ENCODE measurements at regions of chr5 and their contacts with region 1.

Region 1: GRCh38 chr5:79612667-79613198 is 492 bp downstream of the TENT2 start:
- DNase-seq: no peak
- H3K4me3 ChIP-seq: peak overlapping the region; percentile 83 to 91 (median 85)
- H3K27ac ChIP-seq: peak overlapping the region; percentile 87
- H3K4me1 ChIP-seq: no peaks in the 10 kb centered on the region
- H3K27me3 ChIP-seq: no peaks in the 10 kb centered on the region
- CTCF ChIP-seq: no peak

Region 2: DNA sequence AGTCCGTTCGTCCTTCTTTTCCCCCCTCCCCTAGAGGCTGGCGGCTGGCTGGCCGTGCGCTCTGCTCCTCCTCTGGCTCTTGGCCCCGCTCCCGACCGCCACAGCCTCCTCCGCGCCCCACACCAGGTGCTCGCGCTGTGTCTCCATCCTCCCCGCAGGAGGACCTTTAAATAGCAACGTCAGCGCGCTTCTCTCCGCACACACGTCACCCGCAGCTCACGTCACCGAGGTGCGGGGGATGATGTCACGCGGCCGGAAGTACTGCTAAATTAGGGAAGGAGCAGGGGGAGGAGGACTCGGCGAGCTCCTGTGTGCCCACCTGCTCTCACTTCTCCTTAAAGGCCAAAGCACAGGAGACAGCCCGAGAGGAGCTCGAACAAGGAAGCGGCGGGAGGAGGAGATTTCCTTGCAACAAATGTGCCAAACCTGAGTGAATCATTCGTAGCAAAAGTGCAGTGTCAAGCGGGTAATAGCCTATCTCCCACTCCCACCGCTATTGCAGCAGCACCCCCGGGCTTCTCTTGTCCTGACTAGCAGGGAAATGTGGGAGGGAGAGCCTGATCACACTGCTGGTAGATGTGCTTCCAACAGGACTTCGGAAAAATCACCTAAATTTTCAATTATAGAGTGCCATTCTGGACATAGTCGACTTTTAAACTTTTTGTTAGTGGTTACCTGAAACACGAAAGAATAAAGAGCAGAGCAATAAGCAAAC is 98.2 kb before region 1 on chr5:
- CTCF ChIA-PET with region 1: no interaction called
- dilution Hi-C with region 1: no loop called
- in situ Hi-C with region 1: no loop called
- intact Hi-C with region 1: loop called (anchors 2 kb)
- DNase-seq: peak; percentile 95
- H3K4me3 ChIP-seq: peak overlapping the region; percentile 73 to 77 (median 74)
- H3K27ac ChIP-seq: peak overlapping the region; percentile 85
- H3K4me1 ChIP-seq: peaks cover 15% of the 10 kb centered on the region
- H3K27me3 ChIP-seq: no peaks in the 10 kb centered on the region
- CTCF ChIP-seq: no peak